ENCODE measurements at regions of chrX and their contacts with region 1.

Region 1: GRCh38 chrX:76279000-76279399 is 106.1 kb downstream of the PBDC1 start:
- DNase-seq: no peak
- ATAC-seq: no peak

Region 2: GRCh38 chrX:76454456-76454927 is 175.5 kb after region 1 on chrX:
- intact Hi-C with region 1: loop called (anchors 2 kb)
- DNase-seq: no peak
- ATAC-seq: no peak

Region 3: GRCh38 chrX:77704881-77705280 is 1425.9 kb after region 1 on chrX:
- intact Hi-C with region 1: no loop called
- DNase-seq: no peak
- ATAC-seq: no peak